ENCODE measurements at regions of chr2 and their contacts with region 1.

Region 1: GRCh38 chr2:200735061-200735460 is 76.6 kb upstream of the BZW1 start:
- DNase-seq: no peak
- H3K4me3 ChIP-seq: no peak overlapping the region
- H3K27ac ChIP-seq: no peak overlapping the region
- H3K4me1 ChIP-seq: no peaks in the 10 kb centered on the region
- H3K27me3 ChIP-seq: peaks cover 0 to 2% of the 10 kb centered on the region in 2 experiments
- CTCF ChIP-seq: no peak
- POLR2A ChIP-seq: no peak

Region 2: DNA sequence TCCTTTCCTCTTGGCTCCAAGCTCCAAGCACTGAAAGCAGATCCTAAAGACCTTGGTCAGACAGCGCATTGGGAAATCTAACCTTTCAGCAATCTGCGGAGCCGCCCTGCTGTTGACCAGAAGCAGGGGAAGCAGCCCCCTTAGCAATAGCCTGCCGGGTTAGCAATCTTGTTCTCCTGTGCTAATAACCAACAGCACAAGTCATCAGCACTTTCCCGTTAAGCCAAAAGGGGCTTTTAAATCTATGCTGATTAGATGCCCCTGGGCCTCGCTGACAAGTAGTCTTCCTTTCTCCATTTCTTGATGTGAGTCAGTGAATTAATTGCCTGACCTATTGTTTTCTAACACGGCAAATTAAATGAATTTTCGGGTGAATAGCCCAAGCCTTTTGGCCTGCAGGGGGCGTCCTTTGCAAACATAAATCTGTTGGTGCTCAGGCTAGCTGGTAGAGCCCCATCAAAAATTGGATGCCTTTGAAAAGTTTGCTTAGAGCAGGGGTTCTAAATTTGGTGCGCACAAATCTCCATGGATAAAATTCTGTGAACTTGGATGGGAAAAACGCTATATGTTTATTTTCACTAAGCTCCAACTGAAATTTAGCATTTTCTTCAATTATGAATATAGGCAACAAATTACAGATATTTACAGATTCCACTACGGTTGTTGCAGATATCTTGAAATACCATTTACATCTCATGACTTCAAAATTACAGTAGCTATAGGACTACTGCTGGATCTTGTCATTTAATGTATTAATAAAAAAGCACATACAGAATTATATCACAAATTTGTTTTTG is 755.0 kb before region 1 on chr2:
- CTCF ChIA-PET with region 1: interaction called, 29 read pairs
- POLR2A ChIA-PET with region 1: no interaction called
- dilution Hi-C with region 1: no loop called
- intact Hi-C with region 1: loop called (anchors 1 kb)
- DNase-seq: peak; percentile 91
- H3K4me3 ChIP-seq: peak overlapping the region in 2 of 3 experiments; percentile 8 to 9
- H3K27ac ChIP-seq: no peak overlapping the region
- H3K4me1 ChIP-seq: peaks cover 9% of the 10 kb centered on the region
- H3K27me3 ChIP-seq: no peaks in the 10 kb centered on the region
- CTCF ChIP-seq: peak; percentile 66 to 92
- POLR2A ChIP-seq: no peak

Region 3: GRCh38 chr2:200509612-200510433 is 225.2 kb before region 1 on chr2 and contains the start of gene KCTD18:
- CTCF ChIA-PET with region 1: no interaction called
- POLR2A ChIA-PET with region 1: no interaction called
- dilution Hi-C with region 1: no loop called
- intact Hi-C with region 1: no loop called
- DNase-seq: peak; percentile 86
- H3K4me3 ChIP-seq: peak within 1 kb of the TSS; percentile 45 to 64 (median 62)
- H3K27ac ChIP-seq: peak within 1 kb of the TSS; percentile 23
- H3K4me1 ChIP-seq: peaks cover 7% of the 10 kb centered on the region
- H3K27me3 ChIP-seq: peaks cover 21 to 36% of the 10 kb centered on the region in 2 experiments
- CTCF ChIP-seq: peak; percentile 88 to 91
- POLR2A ChIP-seq: peak; percentile 73
- total RNA-seq, gene KCTD18: 5.4 and 6.6 TPM in 2 replicates

Region 4: DNA sequence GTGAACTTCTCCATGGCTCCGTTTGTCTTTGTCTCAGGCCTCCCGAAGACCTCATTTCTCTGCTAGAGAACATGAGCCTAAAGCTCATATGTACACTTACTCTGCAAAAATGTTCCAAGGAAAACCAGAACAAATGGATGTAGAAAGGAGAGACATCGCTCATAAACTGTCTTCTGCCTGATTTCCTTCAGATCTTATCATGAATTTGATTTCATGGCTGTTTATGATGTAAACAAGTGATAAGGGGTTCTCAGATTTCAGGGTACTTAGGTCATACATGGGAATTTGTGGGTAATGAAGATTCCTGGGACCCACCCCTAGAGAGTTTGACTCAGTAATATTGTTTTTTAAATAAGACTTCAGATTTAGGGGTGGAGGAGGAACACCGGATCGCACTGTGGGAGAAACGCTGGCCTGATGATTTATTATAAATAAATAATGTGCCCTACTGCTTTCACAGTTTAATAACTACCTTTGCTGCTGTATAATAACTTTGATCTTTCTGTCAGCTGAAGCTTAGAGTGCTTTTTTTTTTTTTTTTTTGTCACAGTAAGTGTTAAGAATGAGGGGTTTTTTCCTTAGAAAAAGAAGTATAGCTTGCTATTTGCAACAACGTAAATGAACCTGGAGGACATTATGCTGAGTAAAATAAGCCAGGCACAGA is 134.4 kb before region 1 on chr2:
- CTCF ChIA-PET with region 1: no interaction called
- POLR2A ChIA-PET with region 1: no interaction called
- dilution Hi-C with region 1: no loop called
- intact Hi-C with region 1: no loop called
- DNase-seq: no peak
- H3K4me3 ChIP-seq: no peak overlapping the region
- H3K27ac ChIP-seq: no peak overlapping the region
- H3K4me1 ChIP-seq: no peaks in the 10 kb centered on the region
- H3K27me3 ChIP-seq: peaks cover 0 to 7% of the 10 kb centered on the region in 2 experiments
- CTCF ChIP-seq: no peak
- POLR2A ChIP-seq: no peak

Region 5: DNA sequence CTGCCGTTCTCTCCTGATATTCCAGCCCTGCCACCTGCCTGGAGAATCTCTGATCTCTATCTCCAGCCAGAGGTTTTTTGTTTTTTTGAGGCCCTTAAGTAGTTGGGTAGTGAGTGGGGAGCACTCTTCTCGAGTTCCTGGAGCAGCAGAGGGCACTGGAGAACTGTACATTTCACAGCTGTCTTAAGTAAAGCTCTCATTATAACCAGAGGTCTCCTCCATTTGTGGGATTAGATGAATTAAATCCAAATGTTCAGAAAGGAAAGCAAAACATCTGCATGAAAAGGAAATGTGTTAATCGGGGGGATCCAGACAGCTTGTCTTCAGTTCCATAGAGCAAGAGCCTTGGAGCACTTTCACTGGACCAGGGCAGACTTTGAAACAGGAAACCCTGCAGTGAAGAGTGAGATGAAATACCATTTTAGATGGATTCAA is 116.5 kb before region 1 on chr2:
- CTCF ChIA-PET with region 1: no interaction called
- POLR2A ChIA-PET with region 1: no interaction called
- dilution Hi-C with region 1: no loop called
- intact Hi-C with region 1: no loop called
- DNase-seq: no peak
- H3K4me3 ChIP-seq: no peak overlapping the region
- H3K27ac ChIP-seq: no peak overlapping the region
- H3K4me1 ChIP-seq: no peaks in the 10 kb centered on the region
- H3K27me3 ChIP-seq: no peaks in the 10 kb centered on the region
- CTCF ChIP-seq: no peak
- POLR2A ChIP-seq: no peak

Region 6: DNA sequence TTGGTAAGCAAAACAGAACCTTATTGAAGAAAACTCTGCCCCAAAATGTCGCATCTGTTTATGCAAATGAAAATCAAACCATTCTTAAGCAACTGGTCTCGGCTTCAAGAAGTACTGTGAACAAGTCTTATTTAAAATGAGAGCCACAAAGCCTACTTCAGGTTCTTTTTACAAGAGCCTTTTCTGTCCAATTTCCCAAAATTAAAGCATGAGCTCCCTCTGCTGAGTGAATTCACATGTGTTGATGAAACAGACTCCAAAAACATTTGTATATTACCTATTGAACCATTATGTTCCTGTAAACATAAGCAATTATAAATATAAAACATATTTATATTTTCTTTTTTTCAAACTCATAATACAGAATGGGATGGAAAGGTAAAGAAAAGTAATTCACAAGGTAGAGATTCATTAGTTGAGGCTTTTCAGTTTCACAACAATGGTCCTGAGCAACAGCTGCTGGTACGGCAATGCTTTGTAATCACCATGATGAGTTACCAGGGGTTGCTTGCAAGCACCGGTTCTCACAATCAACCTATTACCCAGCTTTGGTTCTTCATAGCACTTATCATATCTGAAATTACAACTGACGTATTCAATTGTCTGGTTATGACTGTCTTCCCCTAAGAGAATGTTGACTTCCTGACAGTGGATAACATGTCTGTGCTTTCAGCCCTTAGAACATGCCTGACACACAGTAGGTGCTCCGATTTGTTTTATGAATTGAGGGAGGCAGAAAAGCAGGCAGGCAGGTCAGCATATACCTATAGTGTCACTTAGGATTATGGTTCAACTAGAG is 31.7 kb before region 1 on chr2:
- CTCF ChIA-PET with region 1: interaction called, 45 read pairs
- POLR2A ChIA-PET with region 1: no interaction called
- dilution Hi-C with region 1: no loop called
- intact Hi-C with region 1: no loop called
- DNase-seq: peak; percentile 58
- H3K4me3 ChIP-seq: no peak overlapping the region
- H3K27ac ChIP-seq: no peak overlapping the region
- H3K4me1 ChIP-seq: no peaks in the 10 kb centered on the region
- H3K27me3 ChIP-seq: peaks cover 16 to 22% of the 10 kb centered on the region in 2 experiments
- CTCF ChIP-seq: peak; percentile 17 to 21
- POLR2A ChIP-seq: no peak

Region 7: GRCh38 chr2:200765139-200765951 is 30.3 kb after region 1 on chr2:
- CTCF ChIA-PET with region 1: interaction called, 12 read pairs
- POLR2A ChIA-PET with region 1: no interaction called
- dilution Hi-C with region 1: no loop called
- intact Hi-C with region 1: no loop called
- DNase-seq: peak; percentile 89
- H3K4me3 ChIP-seq: no peak overlapping the region
- H3K27ac ChIP-seq: peak overlapping the region; percentile 93
- H3K4me1 ChIP-seq: peaks cover 51% of the 10 kb centered on the region
- H3K27me3 ChIP-seq: no peaks in the 10 kb centered on the region
- CTCF ChIP-seq: no peak
- POLR2A ChIP-seq: no peak

Region 8: DNA sequence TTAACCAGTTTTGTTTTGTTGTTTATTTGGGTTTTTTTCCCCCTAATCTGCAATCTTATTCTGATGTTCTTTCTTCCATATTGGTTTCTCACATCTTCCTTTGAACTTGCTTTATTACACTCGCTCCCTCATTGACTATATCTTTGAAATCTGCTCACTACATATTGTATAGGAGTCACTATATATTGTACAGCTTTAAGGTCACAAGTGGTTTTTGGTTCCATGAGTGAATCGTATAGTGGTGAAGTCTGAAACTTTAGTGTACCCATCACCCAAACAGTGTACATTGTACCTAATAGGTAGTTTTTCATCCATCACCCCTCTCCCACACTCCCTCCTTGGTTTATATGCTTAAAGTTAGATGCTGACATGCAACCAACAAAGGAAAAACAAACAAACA is 65.4 kb after region 1 on chr2:
- CTCF ChIA-PET with region 1: no interaction called
- POLR2A ChIA-PET with region 1: no interaction called
- dilution Hi-C with region 1: no loop called
- intact Hi-C with region 1: no loop called
- DNase-seq: no peak
- H3K4me3 ChIP-seq: no peak overlapping the region
- H3K27ac ChIP-seq: no peak overlapping the region
- H3K4me1 ChIP-seq: no peaks in the 10 kb centered on the region
- H3K27me3 ChIP-seq: no peaks in the 10 kb centered on the region
- CTCF ChIP-seq: no peak
- POLR2A ChIP-seq: no peak

Region 9: GRCh38 chr2:200811336-200812121 is 76.5 kb after region 1 on chr2 and contains the start of gene BZW1:
- CTCF ChIA-PET with region 1: interaction called, 10 read pairs
- POLR2A ChIA-PET with region 1: no interaction called
- dilution Hi-C with region 1: no loop called
- intact Hi-C with region 1: loop called (anchors 1 kb)
- DNase-seq: peak; percentile 95
- H3K4me3 ChIP-seq: peak within 1 kb of the TSS; percentile 76 to 99 (median 96)
- H3K27ac ChIP-seq: peak within 1 kb of the TSS; percentile 98
- H3K4me1 ChIP-seq: peaks cover 34% of the 10 kb centered on the region
- H3K27me3 ChIP-seq: no peaks in the 10 kb centered on the region
- CTCF ChIP-seq: no peak
- POLR2A ChIP-seq: peak; percentile 69
- total RNA-seq, gene BZW1: 347 and 353 TPM in 2 replicates

Measured in endothelial cell of umbilical vein (primary cell).